Mammary epithelial cell (primary cell): ENCODE measurements at regions of chr11 and their contacts with region 1.

Region 1: GRCh38 chr11:93652161-93652597 is 9.3 kb upstream of the CEP295 start:
- DNase-seq: peak; percentile 19
- H3K4me3 ChIP-seq: no peak overlapping the region
- H3K27ac ChIP-seq: no peak overlapping the region
- H3K4me1 ChIP-seq: no peaks in the 10 kb centered on the region
- H3K27me3 ChIP-seq: no peaks in the 10 kb centered on the region
- CTCF ChIP-seq: peak; percentile 59 to 65

Region 2: GRCh38 chr11:93234602-93235207 is 417.5 kb before region 1 on chr11:
- CTCF ChIA-PET with region 1: no interaction called
- dilution Hi-C with region 1: no loop called
- in situ Hi-C with region 1: loop called in 1 of 2 experiments (anchors 10 kb)
- intact Hi-C with region 1: loop called (anchors 1 kb)
- DNase-seq: peak; percentile 54
- H3K4me3 ChIP-seq: no peak overlapping the region
- H3K27ac ChIP-seq: no peak overlapping the region
- H3K4me1 ChIP-seq: no peaks in the 10 kb centered on the region
- H3K27me3 ChIP-seq: no peaks in the 10 kb centered on the region
- CTCF ChIP-seq: peak; percentile 97 to 98

Region 3: DNA sequence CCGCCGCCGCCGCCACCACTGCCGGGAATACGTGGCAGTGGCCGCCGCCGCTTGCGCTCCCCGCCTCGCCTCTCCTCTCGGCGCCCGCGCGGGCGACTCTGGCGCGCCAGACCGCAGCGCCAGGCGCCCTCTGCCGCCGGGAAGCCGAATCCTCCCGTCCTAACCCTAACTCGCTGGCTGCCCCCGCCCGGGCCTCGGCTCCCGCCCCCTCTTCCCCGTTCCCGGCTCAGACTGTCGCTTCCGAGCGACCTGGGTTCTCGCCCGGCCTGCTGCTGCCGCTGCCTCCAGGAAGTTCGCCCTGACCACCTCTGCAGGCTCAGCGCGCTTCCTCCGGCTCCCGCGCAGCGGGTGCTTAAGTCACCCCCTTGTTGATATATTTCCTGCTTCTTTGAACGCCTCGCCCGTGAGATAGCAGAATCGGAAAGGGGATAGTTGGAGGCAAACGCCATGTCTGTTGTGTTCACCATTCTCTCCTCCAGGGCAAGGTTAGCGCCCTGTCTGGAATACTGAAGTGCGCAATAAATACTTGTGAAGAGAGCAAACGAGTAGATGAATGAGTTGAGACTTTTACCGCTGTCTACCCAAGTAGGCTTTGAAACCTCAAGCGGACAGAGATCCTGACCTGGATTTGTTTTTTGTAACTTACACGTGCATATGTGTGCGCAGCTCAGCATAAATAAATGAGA is 108.7 kb before region 1 on chr11 and contains the start of gene SMCO4:
- CTCF ChIA-PET with region 1: no interaction called
- dilution Hi-C with region 1: loop called (anchors 5 kb)
- in situ Hi-C with region 1: no loop called
- intact Hi-C with region 1: loop called (anchors 10 kb)
- DNase-seq: peak; percentile 75
- H3K4me3 ChIP-seq: peak within 1 kb of the TSS; percentile 51 to 66 (median 52)
- H3K27ac ChIP-seq: no peak within 1 kb of the TSS
- H3K4me1 ChIP-seq: peaks cover 7% of the 10 kb centered on the region
- H3K27me3 ChIP-seq: no peaks in the 10 kb centered on the region
- CTCF ChIP-seq: peak; percentile 15 to 72
- total RNA-seq, gene SMCO4: 2.2 to 3.6 TPM

Region 4: DNA sequence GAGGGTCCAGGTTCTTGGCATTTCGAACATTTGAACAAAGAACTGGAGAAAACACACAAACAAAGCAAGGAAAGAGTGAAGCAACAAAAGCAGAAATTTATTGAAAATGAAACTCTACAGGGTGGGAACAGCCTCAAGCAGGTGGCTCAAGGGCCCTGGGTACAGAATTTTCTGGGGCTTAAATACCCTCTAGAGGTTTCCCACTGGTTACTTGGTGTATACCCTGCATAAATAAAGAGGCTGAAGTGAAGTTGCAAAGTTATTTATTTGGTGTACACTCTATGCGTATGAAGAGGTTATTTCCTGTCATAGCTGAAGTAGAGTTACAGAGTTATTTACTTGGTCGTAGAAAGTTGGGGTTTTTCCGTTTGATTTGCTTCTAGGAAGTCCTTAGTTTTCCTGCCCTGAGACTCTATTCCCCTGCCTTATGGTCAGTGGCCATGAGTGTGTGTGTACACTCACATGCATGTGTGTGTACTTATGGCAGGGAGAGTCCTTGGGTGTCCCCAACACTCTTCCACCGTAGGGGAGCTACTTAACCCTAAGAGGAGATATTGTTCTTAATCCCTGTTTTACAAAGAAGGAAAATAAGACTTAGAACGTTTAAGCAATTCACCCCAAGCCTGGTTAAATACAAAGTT is 103.4 kb before region 1 on chr11:
- CTCF ChIA-PET with region 1: no interaction called
- dilution Hi-C with region 1: loop called (anchors 5 kb)
- in situ Hi-C with region 1: no loop called
- intact Hi-C with region 1: loop called (anchors 10 kb)
- DNase-seq: no peak
- H3K4me3 ChIP-seq: no peak overlapping the region
- H3K27ac ChIP-seq: no peak overlapping the region
- H3K4me1 ChIP-seq: peaks cover 2% of the 10 kb centered on the region
- H3K27me3 ChIP-seq: no peaks in the 10 kb centered on the region
- CTCF ChIP-seq: no peak